Posterior vena cava (tissue), 2 donors: ENCODE measurements at regions of chr1 and their contacts with region 1.

Region 1: GRCh38 chr1:27102707-27103491 is 52.0 kb downstream of the SLC9A1 start:
- DNase-seq: peak; percentile 94

Region 2: GRCh38 chr1:27154991-27155781 is 52.3 kb after region 1 on chr1 and contains the start of gene SLC9A1:
- intact Hi-C with region 1: loop called in 1 of 2 experiments (anchors 5 kb)
- DNase-seq: peak; percentile 98
- total RNA-seq, gene SLC9A1: 19.0 to 25.3 TPM

Region 3: DNA sequence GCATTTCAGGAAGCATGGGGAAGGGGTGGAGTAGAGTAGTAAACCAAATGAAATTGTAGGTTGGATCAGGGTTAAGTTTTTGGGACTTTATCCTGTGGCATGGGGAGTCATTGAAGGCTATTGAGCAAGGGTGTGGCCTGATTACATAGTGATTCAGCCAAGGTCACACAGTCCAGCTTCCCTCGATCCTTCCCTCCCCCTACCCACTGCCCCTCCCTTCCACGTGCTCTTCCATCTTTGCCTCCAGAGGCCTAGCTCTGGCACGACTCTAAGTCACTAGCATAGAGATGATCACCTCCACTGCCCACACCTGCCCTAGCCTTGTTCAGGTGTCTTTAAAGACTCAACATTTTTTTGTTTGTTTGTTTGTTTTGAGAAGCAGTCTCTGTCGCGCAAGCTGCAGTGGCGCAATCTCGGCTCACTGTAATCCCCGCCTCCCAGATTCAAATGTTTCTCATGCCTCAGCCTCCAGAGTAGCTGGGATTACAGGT is 89.2 kb after region 1 on chr1:
- intact Hi-C with region 1: loop called (anchors 5 kb)
- DNase-seq: no peak

Region 4: DNA sequence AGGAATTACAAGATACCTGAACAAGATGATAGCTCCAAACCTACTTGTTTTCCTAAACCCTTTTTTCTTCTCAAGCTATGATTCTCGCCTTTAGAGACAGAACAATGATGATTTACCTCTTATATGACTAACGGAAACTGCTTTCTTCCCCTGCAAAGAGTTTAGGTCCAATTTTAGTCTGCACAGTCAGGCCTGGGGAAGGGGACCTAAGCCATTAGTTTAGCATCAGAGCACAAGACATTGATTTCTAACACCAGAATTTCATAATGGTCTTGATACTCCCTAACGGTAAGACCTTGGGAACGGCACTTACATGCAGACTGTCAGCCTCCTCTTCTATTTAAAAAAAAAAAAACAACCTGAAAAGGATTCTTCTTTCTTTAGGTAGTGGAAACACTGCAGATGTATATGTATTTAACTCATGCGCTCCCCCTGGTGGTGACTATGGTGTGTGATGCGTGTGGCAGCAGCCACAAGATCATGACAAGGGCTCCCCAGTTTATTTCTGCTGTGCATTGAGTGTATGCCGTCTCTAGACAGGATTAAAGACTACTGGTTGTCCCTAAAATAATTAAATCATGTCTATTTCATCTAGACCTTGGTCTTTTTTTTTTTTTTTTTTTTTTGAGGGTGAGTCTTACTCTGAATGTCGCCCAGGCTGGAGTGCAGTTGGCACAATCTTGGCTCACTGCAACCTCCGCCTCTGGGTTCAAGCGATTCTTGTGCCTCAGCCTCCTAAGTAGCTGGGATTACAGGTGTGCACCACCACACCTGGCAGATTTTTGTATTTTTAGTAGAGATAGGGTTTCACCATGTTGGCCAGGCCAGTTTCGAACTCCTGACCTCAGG is 181.8 kb after region 1 on chr1:
- intact Hi-C with region 1: loop called (anchors 2 to 5 kb)
- DNase-seq: peak; percentile 93